CD8-positive, alpha-beta memory T cell (primary cell): ENCODE measurements at regions of chr19 and their contacts with region 1.

Region 1: DNA sequence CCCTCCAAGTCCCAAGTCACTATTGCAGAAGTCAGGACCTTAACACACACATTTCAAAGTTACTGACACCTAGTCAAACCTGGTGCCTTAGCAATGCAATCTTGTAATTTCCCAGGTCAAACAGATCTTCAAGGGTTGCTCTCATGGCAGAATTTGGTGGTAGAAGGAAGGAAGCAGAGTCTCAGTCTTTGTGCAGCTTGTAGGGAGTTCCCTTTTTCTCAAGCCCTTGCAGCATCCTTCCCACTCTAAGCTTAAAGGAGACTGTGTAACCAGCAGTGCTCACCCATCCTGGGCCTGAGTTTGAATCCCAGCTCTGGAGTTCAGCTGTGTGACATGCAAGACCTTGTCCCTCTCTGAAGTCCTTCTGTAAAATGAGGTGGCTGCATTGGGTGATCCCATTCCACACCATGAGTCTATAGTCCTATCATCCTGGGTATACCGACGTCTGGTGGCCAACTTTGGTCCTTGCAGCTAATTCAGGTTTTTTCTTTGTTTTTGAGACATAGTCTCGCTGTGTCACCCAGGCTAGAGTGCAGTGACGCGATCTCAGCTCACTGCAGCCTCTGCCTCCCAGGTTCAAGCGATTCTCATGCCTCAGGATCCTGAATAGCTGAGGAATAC is 9.8 kb downstream of the SIGLEC10 start:
- DNase-seq: peak in 4 of 5 donors; percentile 15 to 61 (median 30)
- H3K4me3 ChIP-seq: no peak overlapping the region
- H3K4me3 Mint-ChIP-seq: no peak overlapping the region
- H3K27ac ChIP-seq: no peak overlapping the region
- H3K27ac Mint-ChIP-seq: no peak overlapping the region
- H3K4me1 ChIP-seq: no peaks in the 10 kb centered on the region
- H3K4me1 Mint-ChIP-seq: peaks cover 4 to 7% (median 5%) of the 10 kb centered on the region in 3 donors
- H3K27me3 ChIP-seq: no peaks in the 10 kb centered on the region
- H3K27me3 Mint-ChIP-seq: no peaks in the 10 kb centered on the region

Region 2: DNA sequence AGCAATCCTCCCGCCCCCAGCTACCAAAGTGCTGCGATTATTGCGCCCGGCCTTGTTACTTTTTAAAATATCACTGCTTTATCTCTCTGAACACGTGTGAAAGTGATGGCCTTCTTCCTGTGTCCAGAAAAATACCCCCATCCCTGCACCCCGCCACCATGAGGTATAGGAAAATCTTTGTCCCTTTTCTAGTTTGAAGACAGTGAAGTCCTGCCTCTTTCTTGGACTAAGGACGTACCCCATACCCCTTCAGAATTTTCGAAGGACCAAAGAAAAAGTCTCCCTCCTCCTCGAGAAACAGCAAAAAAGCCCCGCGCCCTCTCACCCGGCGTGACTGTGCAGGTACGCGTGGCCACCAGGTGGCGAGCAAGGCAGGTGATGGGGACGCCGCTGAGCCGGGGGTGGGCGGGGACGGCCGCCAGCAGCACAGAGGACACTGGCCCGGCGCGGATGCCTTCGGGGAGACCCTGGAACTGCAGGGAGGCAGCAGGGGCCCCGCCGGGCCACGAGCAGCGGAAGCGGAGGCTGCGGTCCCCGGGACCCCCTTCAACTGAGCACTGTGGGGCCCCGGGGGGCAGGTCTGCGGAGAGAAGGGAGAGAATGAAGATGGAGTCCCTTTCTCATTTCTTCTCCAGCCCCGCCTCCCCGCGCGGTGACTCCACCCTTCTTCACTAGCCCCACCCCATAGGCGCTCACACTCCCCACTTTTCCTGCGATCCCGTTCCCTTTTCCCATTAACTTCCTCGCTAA is 68.9 kb before region 1 on chr19:
- CTCF ChIA-PET with region 1: interaction called, 20 read pairs
- POLR2A ChIA-PET with region 1: no interaction called
- DNase-seq: peak; percentile 77 to 87 (median 82)
- H3K4me3 ChIP-seq: peak overlapping the region; percentile 81
- H3K4me3 Mint-ChIP-seq: peak overlapping the region; percentile 84 to 92 (median 88)
- H3K27ac ChIP-seq: peak overlapping the region; percentile 62
- H3K27ac Mint-ChIP-seq: peak overlapping the region in 7 of 8 donors; percentile 27 to 89 (median 78)
- H3K4me1 ChIP-seq: peaks cover 15% of the 10 kb centered on the region
- H3K4me1 Mint-ChIP-seq: peaks cover 14 to 26% (median 25%) of the 10 kb centered on the region in 3 donors
- H3K27me3 ChIP-seq: no peaks in the 10 kb centered on the region
- H3K27me3 Mint-ChIP-seq: peaks cover 0 to 4% of the 10 kb centered on the region in 2 donors

Region 3: GRCh38 chr19:51431124-51431523 is 23.5 kb after region 1 on chr19:
- CTCF ChIA-PET with region 1: no interaction called
- POLR2A ChIA-PET with region 1: no interaction called
- DNase-seq: no peak
- H3K4me3 ChIP-seq: no peak overlapping the region
- H3K4me3 Mint-ChIP-seq: no peak overlapping the region
- H3K27ac ChIP-seq: no peak overlapping the region
- H3K27ac Mint-ChIP-seq: no peak overlapping the region
- H3K4me1 ChIP-seq: no peaks in the 10 kb centered on the region
- H3K4me1 Mint-ChIP-seq: no peaks in the 10 kb centered on the region
- H3K27me3 ChIP-seq: no peaks in the 10 kb centered on the region
- H3K27me3 Mint-ChIP-seq: peaks cover 5 to 8% of the 10 kb centered on the region in 2 donors